ENCODE measurements at regions of chr14 and their contacts with region 1.

Region 1: DNA sequence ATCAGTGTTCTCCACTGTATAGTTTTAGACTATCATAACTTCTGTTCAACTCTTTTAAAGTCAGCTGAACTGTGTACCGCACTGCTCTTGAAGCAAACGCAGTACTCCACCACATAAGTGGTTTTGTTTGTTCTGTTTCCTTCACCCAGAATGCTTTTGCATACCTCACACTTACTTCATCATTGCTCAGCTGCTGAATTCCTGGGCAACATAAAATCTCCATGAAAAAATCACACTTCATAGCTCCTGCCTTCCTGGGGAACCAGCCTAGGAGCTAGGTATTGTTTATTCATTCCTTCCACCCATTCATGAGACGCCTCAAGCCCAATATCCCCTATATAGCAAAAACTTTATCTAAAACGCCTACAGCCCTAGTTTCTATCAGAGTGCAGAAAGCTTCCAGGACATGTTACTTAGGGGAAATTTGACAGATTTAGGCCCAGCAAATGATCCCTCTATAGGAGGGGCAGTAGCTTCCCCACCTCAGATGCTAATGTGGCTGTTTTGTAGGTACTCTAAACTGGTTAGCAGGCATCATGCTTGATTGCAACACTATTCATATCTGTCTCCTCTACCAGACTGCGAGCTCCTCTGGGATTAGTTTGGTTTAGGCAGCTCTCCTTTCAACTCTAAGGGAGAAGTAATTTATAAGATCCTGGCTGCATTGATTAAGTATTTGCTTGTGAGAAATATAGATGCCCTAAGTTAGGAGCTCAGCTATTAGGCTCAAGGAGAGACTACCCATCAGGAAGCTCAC is 44.5 kb downstream of the LRRC9 start:
- DNase-seq: no peak
- H3K4me3 ChIP-seq: no peak overlapping the region
- CTCF ChIP-seq: no peak

Region 2: DNA sequence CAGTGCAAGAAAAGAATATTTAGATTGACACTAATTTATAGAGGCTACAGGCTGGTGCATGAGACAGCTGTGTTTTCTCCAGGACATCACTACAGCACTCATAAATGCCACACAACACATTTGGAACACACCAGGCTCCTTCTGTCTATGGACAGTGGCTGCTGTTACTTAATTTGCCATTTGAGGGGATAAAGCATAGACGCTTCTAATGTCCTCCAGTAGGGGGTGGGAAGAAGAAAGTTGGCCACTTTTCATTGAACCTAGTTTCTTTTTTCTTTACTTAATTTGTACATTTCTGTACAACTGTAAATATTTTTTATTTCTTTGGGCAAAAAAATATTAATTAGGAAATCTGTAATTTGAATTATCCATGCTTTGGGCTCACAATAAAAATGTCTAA is 81.5 kb before region 1 on chr14:
- in situ Hi-C with region 1: no loop called
- DNase-seq: no peak
- H3K4me3 ChIP-seq: no peak overlapping the region
- CTCF ChIP-seq: peak; percentile 37

Region 3: DNA sequence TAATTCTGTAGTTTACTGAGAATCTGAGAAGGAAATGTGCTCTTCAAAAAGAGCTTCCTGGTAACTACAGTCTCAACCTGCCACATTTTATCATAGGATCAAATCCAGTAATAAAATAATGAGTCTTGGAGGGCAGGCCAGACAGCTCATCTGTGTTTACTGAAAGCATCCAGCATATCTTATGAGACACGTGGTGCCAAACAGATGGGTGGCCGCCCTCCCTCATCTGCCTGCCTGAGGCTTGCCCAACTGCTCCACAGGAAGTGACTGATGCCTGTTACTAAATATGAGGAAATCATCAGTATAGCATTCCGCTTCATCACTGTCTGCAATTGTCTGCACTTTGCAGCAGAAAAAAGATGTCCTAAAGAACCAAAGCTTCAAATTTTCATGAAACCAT is 187.3 kb after region 1 on chr14:
- in situ Hi-C with region 1: loop called (anchors 5 kb)
- DNase-seq: no peak
- H3K4me3 ChIP-seq: no peak overlapping the region
- CTCF ChIP-seq: no peak